BJ (cell line): ENCODE measurements at regions of chr3 and their contacts with region 1.

Region 1: GRCh38 chr3:124814620-124815421 is 72.3 kb downstream of the ITGB5 start:
- DNase-seq: no peak
- H3K4me3 ChIP-seq: no peak overlapping the region
- H3K27me3 ChIP-seq: no peaks in the 10 kb centered on the region
- CTCF ChIP-seq: no peak

Region 2: GRCh38 chr3:123006609-123007008 is 1808.2 kb before region 1 on chr3:
- CTCF ChIA-PET with region 1: no interaction called
- POLR2A ChIA-PET with region 1: interaction called, 15 read pairs
- DNase-seq: no peak
- H3K4me3 ChIP-seq: no peak overlapping the region
- H3K27me3 ChIP-seq: peaks cover 33% of the 10 kb centered on the region
- CTCF ChIP-seq: no peak

Region 3: GRCh38 chr3:125098611-125099291 is 283.9 kb after region 1 on chr3:
- CTCF ChIA-PET with region 1: no interaction called
- POLR2A ChIA-PET with region 1: no interaction called
- DNase-seq: no peak
- H3K4me3 ChIP-seq: no peak overlapping the region
- H3K27me3 ChIP-seq: no peaks in the 10 kb centered on the region; the same call in 1 of the 2 replicates
- CTCF ChIP-seq: no peak